ENCODE measurements at regions of chr21 and their contacts with region 1.

Region 1: DNA sequence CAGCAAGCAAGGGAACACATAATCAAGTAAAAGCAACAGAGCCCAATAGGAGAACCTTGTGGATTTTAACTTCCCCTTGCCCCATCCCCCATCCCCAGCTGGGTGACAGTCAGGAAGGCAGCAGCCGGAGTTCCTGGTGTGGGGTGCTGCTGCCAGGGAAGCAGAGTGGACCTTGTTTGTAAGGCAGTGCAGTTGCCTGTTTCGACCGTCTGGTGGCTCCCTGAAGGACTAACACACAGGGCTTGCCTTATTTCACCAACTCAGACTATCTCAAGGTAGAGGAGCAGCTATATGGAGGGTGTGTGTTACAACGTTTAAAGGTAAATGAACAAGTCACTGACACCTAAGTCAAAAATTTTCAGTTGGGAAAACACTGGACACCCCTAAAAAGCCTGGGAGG is 6.6 kb downstream of the KRTAP10-8 start:
- DNase-seq: peak; percentile 77
- ATAC-seq: peak; percentile 77

Region 2: GRCh38 chr21:44742418-44743153 is 124.1 kb after region 1 on chr21:
- intact Hi-C with region 1: loop called (anchors 10 kb)
- DNase-seq: no peak
- ATAC-seq: no peak

Measured in Right ventricle myocardium inferior (tissue), 1 donor.